A549 (cell line): ENCODE measurements at regions of chr9 and their contacts with region 1.

Region 1: GRCh38 chr9:131178382-131178781 is 53.0 kb downstream of the NUP214 start:
- DNase-seq: peak; percentile 67 to 88
- ATAC-seq: peak; percentile 98 to 99
- H3K4me3 ChIP-seq: no peak overlapping the region
- H3K27ac ChIP-seq: no peak overlapping the region
- H3K4me1 ChIP-seq: no peaks in the 10 kb centered on the region
- CTCF ChIP-seq: peak; percentile 70
- EP300 ChIP-seq: no peak
- POLR2A ChIP-seq: no peak
- RAD21 ChIP-seq: peak; percentile 74 to 79

Region 2: GRCh38 chr9:131097948-131098278 is 80.5 kb before region 1 on chr9:
- CTCF ChIA-PET with region 1: no interaction called
- POLR2A ChIA-PET with region 1: no interaction called
- DNase-seq: no peak
- ATAC-seq: no peak
- H3K4me3 ChIP-seq: no peak overlapping the region
- H3K27ac ChIP-seq: no peak overlapping the region
- H3K4me1 ChIP-seq: 0 out of 3 replicates have a peak, but pooled peaks cover 7% of the 10 kb centered on the region
- CTCF ChIP-seq: no peak
- EP300 ChIP-seq: no peak
- POLR2A ChIP-seq: no peak
- RAD21 ChIP-seq: no peak

Region 3: DNA sequence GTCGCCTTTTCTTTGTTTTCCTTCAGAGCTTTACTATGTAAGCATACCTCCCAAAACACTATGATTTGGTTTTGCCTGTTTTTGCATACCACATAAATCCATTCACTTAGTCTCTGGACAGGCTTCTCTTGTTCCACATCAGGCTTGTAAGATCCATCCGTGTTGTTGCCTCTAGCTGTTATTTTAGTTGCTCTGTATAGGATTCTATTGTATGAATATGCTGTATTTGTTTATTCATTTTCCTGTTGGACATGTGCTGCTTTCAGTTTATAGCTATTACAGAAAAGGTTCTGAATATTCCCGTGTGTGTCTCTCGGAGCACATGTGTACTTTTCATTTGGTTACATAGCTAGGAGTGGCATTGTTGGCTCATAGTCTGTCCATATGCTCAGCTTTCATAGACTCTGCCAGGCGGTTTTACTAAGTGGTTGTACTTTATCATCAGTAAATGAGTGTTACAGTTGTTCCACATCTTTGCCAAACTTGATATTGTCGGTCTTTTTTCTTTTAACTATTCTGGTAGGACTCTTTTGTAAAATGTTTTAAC is 11.2 kb before region 1 on chr9:
- CTCF ChIA-PET with region 1: interaction called, 64 read pairs
- POLR2A ChIA-PET with region 1: no interaction called
- DNase-seq: no peak
- ATAC-seq: no peak
- H3K4me3 ChIP-seq: no peak overlapping the region
- H3K27ac ChIP-seq: no peak overlapping the region
- H3K4me1 ChIP-seq: no peaks in the 10 kb centered on the region
- CTCF ChIP-seq: no peak
- EP300 ChIP-seq: no peak
- POLR2A ChIP-seq: no peak
- RAD21 ChIP-seq: no peak

Region 4: GRCh38 chr9:131197160-131197911 is 19.0 kb after region 1 on chr9:
- CTCF ChIA-PET with region 1: interaction called, 21 read pairs
- POLR2A ChIA-PET with region 1: no interaction called
- DNase-seq: no peak
- ATAC-seq: no peak; a peak in 1 of 6 replicates
- H3K4me3 ChIP-seq: no peak overlapping the region
- H3K27ac ChIP-seq: no peak overlapping the region
- H3K4me1 ChIP-seq: no peaks in the 10 kb centered on the region
- CTCF ChIP-seq: no peak
- EP300 ChIP-seq: no peak
- POLR2A ChIP-seq: no peak
- RAD21 ChIP-seq: no peak

Region 5: DNA sequence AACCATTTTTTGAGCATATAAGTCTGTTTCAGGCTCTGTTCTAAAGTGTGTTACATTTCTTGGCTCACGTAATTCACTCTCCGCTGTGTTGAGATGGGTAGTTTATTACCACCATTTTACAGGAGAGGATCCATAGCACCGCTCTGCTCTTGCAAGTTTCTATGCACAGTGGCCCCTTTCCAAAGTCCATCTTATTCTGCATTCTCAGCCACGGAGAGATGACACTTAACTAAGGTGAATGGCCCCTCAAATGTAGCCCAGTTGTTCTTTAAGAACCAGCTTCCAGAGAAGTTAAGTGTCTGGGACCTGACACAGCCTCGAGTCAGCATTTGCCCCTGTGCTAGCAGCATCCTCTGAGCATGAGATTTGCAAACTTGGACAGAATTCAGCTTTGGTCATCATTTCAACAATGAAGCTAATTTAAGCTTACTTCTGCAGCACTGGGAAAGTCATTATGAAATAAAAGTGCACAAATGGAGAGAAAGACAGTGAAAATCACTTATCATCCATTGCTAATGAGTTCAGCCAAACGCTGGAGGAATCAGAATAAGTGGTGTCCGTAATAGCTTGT is 36.0 kb after region 1 on chr9:
- CTCF ChIA-PET with region 1: interaction called, 13 read pairs
- POLR2A ChIA-PET with region 1: no interaction called
- DNase-seq: no peak
- ATAC-seq: no peak
- H3K4me3 ChIP-seq: no peak overlapping the region
- H3K27ac ChIP-seq: no peak overlapping the region
- H3K4me1 ChIP-seq: no peaks in the 10 kb centered on the region
- CTCF ChIP-seq: no peak
- EP300 ChIP-seq: no peak
- POLR2A ChIP-seq: no peak
- RAD21 ChIP-seq: no peak

Region 6: GRCh38 chr9:131320031-131320685 is 141.8 kb after region 1 on chr9:
- CTCF ChIA-PET with region 1: interaction called, 10 read pairs
- POLR2A ChIA-PET with region 1: no interaction called
- DNase-seq: no peak
- ATAC-seq: no peak; a peak in 1 of 6 replicates
- H3K4me3 ChIP-seq: no peak overlapping the region
- H3K27ac ChIP-seq: no peak overlapping the region
- H3K4me1 ChIP-seq: peaks cover 14% of the 10 kb centered on the region; the same call in 2 of the 3 replicates
- CTCF ChIP-seq: no peak
- EP300 ChIP-seq: no peak
- POLR2A ChIP-seq: no peak
- RAD21 ChIP-seq: no peak

Region 7: GRCh38 chr9:131407717-131408195 is 229.4 kb after region 1 on chr9:
- CTCF ChIA-PET with region 1: no interaction called
- POLR2A ChIA-PET with region 1: no interaction called
- DNase-seq: peak in 1 of 2 experiments; percentile 45
- ATAC-seq: peak; percentile 54 to 74
- H3K4me3 ChIP-seq: no peak overlapping the region
- H3K27ac ChIP-seq: no peak overlapping the region; a peak in 1 of 6 replicates
- H3K4me1 ChIP-seq: peaks cover 93% of the 10 kb centered on the region
- CTCF ChIP-seq: no peak
- EP300 ChIP-seq: no peak
- POLR2A ChIP-seq: no peak
- RAD21 ChIP-seq: no peak